ENCODE measurements at regions of chr1 and their contacts with region 1.

Region 1: DNA sequence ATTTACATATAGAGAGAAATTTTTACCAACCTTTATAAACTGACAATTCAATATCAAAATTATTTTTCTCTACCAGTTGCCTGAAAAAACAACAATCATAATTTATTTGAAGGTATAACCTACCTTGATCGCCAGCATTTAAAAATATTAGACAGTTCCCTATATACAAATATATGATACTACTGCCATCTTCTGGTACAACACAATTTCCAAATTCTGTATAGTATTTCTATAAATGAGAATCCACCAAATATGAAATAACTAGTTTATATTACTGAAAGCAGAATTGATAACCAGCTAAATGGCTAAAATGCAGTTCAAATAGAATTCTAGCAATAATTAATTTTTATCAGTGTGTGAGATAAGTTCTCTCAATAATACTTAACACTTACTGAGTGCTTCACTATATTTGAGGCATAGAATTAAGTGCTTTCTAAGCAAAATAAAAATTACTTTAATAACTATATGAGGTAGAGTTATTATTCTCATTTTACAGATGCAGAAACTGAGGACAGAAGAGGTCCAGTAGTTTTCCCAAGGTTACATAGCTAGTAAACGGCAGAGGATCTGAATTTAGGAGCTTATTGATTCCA is 75.6 kb downstream of the PIGK start:
- DNase-seq: no peak
- H3K4me3 Mint-ChIP-seq: no peak overlapping the region
- H3K27ac Mint-ChIP-seq: no peak overlapping the region
- H3K4me1 Mint-ChIP-seq: no peaks in the 10 kb centered on the region
- H3K27me3 Mint-ChIP-seq: no peaks in the 10 kb centered on the region

Region 2: GRCh38 chr1:76154206-76154956 is 989.2 kb before region 1 on chr1:
- CTCF ChIA-PET with region 1: interaction called, 12 read pairs
- POLR2A ChIA-PET with region 1: no interaction called
- DNase-seq: peak; percentile 83
- H3K4me3 Mint-ChIP-seq: peak overlapping the region; percentile 78
- H3K27ac Mint-ChIP-seq: peak overlapping the region; percentile 87
- H3K4me1 Mint-ChIP-seq: peaks cover 15% of the 10 kb centered on the region
- H3K27me3 Mint-ChIP-seq: peaks cover 6% of the 10 kb centered on the region

Region 3: GRCh38 chr1:76891931-76892622 is 251.5 kb before region 1 on chr1:
- CTCF ChIA-PET with region 1: no interaction called
- POLR2A ChIA-PET with region 1: no interaction called
- DNase-seq: no peak
- H3K4me3 Mint-ChIP-seq: no peak overlapping the region
- H3K27ac Mint-ChIP-seq: no peak overlapping the region
- H3K4me1 Mint-ChIP-seq: no peaks in the 10 kb centered on the region
- H3K27me3 Mint-ChIP-seq: peaks cover 3% of the 10 kb centered on the region

Region 4: DNA sequence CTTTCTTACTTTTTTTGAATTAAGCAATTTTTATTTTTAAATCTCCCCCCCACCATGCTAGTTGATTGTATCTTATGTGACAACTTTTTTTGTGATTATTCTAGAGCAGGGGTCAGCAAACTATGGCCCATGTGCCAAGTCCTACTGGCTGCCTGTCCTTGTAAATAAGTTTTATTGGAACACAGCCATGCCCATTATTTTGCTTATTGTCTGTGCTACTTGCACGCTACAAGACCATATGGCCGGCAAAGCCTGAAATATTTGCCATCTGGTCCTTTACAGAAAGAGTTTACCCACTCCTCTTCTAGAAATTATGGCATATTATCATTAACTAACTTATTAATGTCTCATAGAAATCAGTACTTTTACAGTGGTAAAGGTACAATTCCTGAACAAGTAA is 189.9 kb after region 1 on chr1:
- CTCF ChIA-PET with region 1: no interaction called
- POLR2A ChIA-PET with region 1: no interaction called
- DNase-seq: no peak
- H3K4me3 Mint-ChIP-seq: no peak overlapping the region
- H3K27ac Mint-ChIP-seq: no peak overlapping the region
- H3K4me1 Mint-ChIP-seq: no peaks in the 10 kb centered on the region
- H3K27me3 Mint-ChIP-seq: no peaks in the 10 kb centered on the region

Measured in activated CD4-positive, alpha-beta memory T cell treated with anti-CD3 and anti-CD28 coated beads, Interleukin-2, amount 10 ng/mL, durations not matched to agents 7 days and 5 days (primary cell).